ENCODE measurements at regions of chr5 and their contacts with region 1.

Region 1: GRCh38 chr5:16552666-16553343 is 64.0 kb downstream of the RETREG1 start:
- DNase-seq: no peak
- H3K4me3 ChIP-seq: no peak overlapping the region
- H3K27me3 ChIP-seq: peaks cover 1% of the 10 kb centered on the region; the same call in 1 of the 2 replicates
- CTCF ChIP-seq: peak; percentile 96

Region 2: GRCh38 chr5:16461782-16462181 is 91.0 kb before region 1 on chr5:
- CTCF ChIA-PET with region 1: no interaction called
- POLR2A ChIA-PET with region 1: no interaction called
- DNase-seq: peak; percentile 75
- H3K4me3 ChIP-seq: no peak overlapping the region
- H3K27me3 ChIP-seq: no peaks in the 10 kb centered on the region
- CTCF ChIP-seq: no peak

Region 3: DNA sequence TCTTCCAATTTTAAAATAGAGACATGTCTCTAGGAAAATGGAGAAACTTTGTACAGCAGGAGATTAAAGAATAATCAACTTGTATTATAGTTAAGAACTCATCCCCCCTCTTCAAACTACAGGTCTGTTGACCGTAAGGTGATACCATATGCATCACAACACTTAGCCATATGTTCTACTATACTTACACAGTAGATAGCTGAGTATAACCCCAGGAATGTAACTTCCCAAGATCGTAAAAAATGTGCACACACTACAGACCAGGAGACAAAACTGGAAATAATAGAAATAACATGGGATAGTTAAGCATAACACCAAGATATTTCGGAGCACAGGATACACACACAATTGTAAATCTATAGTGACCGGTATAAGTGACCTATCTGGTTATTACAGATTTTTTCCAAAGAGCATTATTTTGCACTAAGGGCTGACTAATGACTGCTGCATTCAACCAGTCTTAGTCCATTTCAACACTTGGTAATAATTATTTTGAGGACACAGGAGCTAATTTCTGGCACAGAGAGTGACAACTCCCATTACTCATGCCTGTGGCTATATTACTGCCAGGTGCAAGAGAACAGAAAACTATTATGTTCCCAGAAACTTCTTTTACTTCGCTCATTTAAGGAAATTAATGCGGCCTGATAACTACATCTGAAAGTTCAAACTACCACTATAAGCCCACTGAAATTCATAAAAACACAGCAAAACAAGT is 71.8 kb before region 1 on chr5:
- CTCF ChIA-PET with region 1: interaction called, 38 read pairs
- POLR2A ChIA-PET with region 1: no interaction called
- DNase-seq: no peak
- H3K4me3 ChIP-seq: no peak overlapping the region
- H3K27me3 ChIP-seq: no peaks in the 10 kb centered on the region
- CTCF ChIP-seq: no peak

Region 4: DNA sequence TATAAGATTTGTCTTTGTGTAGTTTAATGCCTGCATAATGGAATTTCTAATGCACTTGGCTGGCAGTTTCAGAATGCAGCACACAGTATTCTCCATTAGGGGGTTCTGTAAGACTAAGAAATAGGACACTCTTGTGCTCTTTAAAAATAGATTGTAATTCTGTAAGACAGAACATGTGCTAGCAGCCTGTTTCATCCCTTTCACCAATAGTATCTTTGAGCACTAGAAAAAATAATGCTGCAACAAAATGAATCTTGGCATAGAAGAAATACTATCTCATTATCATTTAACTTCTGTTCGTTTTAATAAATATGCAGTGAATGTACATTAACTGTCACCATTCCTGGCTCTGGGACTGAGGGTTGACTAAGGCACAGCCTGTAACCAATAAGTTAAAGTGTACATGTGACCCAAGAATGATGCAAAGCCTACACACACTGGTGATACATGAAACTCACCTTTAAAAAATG is 63.4 kb before region 1 on chr5:
- CTCF ChIA-PET with region 1: interaction called, 166 read pairs
- POLR2A ChIA-PET with region 1: no interaction called
- DNase-seq: no peak
- H3K4me3 ChIP-seq: no peak overlapping the region
- H3K27me3 ChIP-seq: peaks cover 2% of the 10 kb centered on the region
- CTCF ChIP-seq: peak; percentile 67

Region 5: GRCh38 chr5:16539169-16539721 is 13.6 kb before region 1 on chr5:
- CTCF ChIA-PET with region 1: interaction called, 56 read pairs
- POLR2A ChIA-PET with region 1: no interaction called
- DNase-seq: peak; percentile 78
- H3K4me3 ChIP-seq: no peak overlapping the region
- H3K27me3 ChIP-seq: no peaks in the 10 kb centered on the region; the same call in 1 of the 2 replicates
- CTCF ChIP-seq: no peak

Region 6: GRCh38 chr5:16568875-16569580 is 16.2 kb after region 1 on chr5:
- CTCF ChIA-PET with region 1: interaction called, 22 read pairs
- POLR2A ChIA-PET with region 1: no interaction called
- DNase-seq: no peak
- H3K4me3 ChIP-seq: no peak overlapping the region
- H3K27me3 ChIP-seq: no peaks in the 10 kb centered on the region
- CTCF ChIP-seq: no peak

Region 7: DNA sequence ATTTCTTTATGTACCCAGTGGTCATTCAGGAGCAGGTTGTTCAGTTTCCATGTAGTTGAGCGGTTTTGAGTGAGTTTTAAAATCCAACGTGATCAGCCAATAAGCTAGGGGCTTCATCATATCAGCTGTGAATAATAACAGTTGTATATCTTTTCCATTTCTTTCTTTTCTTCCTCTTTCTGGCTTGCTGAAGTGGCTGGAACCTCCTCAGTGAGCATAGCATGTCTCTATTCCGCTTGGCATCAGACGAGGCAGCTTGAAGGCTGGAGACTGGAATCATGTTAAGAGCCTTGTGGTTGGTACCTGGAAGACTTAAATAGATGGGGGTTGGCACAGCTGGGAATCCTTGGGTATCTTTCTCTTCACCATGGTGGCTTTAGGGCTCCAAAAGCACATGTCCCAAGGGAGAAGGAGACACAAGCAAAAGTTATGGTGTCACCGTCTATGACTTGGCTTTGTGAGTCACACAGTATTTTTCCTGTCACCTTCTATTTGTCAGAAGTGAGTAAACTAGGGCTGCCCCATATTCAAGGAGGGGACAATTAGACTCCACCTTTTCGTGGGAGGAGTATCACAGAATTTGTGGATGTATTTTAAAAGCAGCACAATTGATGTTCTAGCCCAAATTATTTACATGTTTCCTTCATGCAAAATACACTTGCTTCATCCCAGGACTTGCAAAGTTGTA is 102.0 kb after region 1 on chr5:
- CTCF ChIA-PET with region 1: no interaction called
- POLR2A ChIA-PET with region 1: no interaction called
- DNase-seq: no peak
- H3K4me3 ChIP-seq: no peak overlapping the region
- H3K27me3 ChIP-seq: peaks cover 2% of the 10 kb centered on the region; the same call in 1 of the 2 replicates
- CTCF ChIP-seq: no peak

Region 8: DNA sequence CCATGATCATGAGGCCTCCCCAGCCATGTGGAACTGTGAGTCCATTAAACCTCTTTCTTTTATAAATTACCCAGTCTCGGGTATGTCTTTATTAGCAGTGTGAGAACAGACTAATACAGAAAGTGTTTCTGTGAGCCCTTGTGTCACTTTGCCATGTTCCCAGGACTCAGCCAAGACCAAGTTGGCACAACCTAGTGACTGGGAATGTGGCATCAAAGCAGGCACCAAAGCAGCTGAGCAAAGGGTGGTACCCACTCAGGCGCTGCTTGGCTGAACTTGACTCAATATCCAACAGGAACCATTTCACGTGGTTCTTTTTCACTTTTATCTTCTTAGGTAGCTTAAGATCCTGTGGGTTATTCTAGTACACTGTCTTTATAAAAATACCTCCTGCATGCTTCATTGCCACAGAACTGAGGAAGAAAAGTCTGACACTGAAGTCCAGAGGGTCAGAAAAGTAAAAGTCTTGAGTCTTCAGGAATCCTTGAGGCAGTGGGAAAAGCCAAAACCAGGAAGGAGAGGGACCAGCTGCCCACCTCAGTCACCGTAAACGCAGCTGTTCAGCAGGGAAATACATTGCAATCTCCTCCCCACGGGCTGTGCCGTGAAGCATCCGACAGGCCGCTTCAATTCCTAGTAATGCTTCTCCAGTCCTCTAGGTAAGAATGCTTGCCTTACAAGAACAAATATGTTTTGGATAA is 154.5 kb after region 1 on chr5:
- CTCF ChIA-PET with region 1: no interaction called
- POLR2A ChIA-PET with region 1: no interaction called
- DNase-seq: no peak
- H3K4me3 ChIP-seq: no peak overlapping the region
- H3K27me3 ChIP-seq: no peaks in the 10 kb centered on the region
- CTCF ChIP-seq: no peak